ENCODE measurements at regions of chr6 and their contacts with region 1.

Region 1: DNA sequence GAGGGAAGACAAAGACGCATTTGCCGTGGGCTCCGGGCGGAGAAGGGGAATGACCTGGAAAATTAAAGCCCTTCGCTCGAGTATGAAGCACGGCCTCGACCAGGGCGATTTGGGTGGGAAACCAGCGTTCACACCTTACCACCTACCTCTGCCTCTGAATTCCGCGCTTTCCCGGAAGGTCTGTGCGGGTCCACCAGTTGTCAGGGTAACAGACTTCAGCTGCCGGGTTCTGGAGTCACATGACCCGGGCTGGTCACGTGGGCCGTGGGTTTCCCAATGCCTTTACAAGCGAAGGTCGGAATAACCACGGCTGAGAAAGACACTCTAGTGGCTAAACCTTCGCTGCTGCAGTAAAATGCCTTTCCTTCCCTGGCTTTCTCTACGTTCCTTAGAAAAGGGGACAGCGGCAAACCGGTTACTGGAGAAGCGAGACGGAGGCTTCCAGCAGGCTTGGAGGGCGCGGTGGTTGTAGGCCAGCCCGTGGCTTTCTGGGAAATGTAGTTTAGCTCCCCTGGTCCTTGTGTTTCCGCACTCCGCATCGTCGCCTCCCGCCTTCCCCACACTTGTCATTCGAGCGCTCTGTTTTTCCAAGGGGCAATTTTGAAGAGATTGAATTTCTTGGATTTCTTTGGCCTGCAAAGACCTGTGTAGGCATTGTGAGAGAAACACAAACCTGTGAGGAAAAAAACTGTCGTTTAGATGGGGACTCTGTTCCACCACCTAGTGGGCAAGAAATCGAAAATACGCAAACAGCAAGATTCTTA is at the start of gene CEP162:
- DNase-seq: peak; percentile 92 to 94
- H3K4me3 ChIP-seq: peak within 1 kb of the TSS; percentile 77 to 94 (median 89)
- H3K27ac ChIP-seq: peak within 1 kb of the TSS; percentile 80 to 91 (median 90)
- H3K4me1 ChIP-seq: peaks cover 0 to 7% of the 10 kb centered on the region in 2 donors
- H3K27me3 ChIP-seq: no peaks in the 10 kb centered on the region
- CTCF ChIP-seq: peak; percentile 38 to 79 (median 64)
- POLR2A ChIP-seq: peak in 1 of 2 donors; percentile 25
- total RNA-seq, gene CEP162: 15.0 to 23.2 (median 18.5) TPM

Region 2: GRCh38 chr6:83884523-83884922 is 343.1 kb before region 1 on chr6:
- intact Hi-C with region 1: loop called (anchors 10 kb)
- DNase-seq: no peak
- H3K4me3 ChIP-seq: no peak overlapping the region
- H3K27ac ChIP-seq: no peak overlapping the region
- H3K4me1 ChIP-seq: no peaks in the 10 kb centered on the region
- H3K27me3 ChIP-seq: no peaks in the 10 kb centered on the region
- CTCF ChIP-seq: peak; percentile 10 to 64 (median 46)
- POLR2A ChIP-seq: no peak